GM12878 (cell line): ENCODE measurements at regions of chr14 and their contacts with region 1.

Region 1: DNA sequence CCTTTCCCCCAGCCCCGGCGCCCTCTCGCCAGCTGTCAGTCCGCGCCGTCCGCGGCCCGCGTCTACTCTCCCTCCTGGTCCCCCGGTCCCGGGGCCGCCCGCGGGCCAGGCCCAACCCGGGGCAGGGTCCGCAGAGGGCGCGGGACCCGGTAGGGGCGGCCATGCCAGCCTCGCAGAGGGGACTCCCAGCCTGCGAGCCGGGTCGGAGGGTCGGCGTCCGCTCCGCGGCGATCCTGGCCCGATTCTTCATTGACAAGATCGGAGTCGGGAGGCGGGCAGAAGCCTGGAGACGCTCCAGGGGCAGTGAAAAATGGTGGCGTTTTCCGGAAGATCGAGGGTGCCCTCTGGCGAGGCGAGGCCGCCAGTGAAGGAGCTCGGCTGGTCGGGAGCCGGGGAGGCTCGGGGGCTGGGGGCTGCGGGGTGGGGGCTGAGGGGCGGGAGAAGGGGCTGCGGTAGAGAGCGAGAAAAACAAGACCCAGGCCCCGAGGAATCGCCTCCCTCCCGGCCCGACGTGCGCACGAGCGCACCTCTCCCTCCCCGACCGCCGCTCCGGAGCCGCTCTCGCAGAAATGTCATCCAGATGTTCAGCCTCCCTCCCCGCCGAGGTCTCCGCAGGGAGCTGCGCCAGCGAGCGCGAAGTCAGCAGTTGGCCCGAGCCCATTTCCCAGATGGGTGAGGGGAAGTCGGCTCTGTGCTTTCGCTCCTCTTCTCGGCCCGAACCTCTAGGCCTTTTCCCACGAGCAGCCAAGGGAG is 647 bp upstream of the TGFB3 start:
- DNase-seq: no peak
- ATAC-seq: peak; percentile 81
- H3K4me3 ChIP-seq: peak overlapping the region; percentile 92
- H3K27ac ChIP-seq: 0 out of 2 replicates have a peak overlapping the region, but pooled peaks have one; percentile 47
- H3K4me1 ChIP-seq: peaks cover 24% of the 10 kb centered on the region
- H3K27me3 ChIP-seq: no peaks in the 10 kb centered on the region; a peak in 1 of 4 replicates
- CTCF ChIP-seq: peak; percentile 57 to 79 (median 77)
- EP300 ChIP-seq: no peak
- POLR2A ChIP-seq: no peak
- RAD21 ChIP-seq: peak; percentile 80

Region 2: GRCh38 chr14:75176142-75176820 is 806.2 kb before region 1 on chr14 and contains the start of gene TMED10:
- CTCF ChIA-PET with region 1: no interaction called
- POLR2A ChIA-PET with region 1: no interaction called
- RAD21 ChIA-PET with region 1: no interaction called
- SMC1A ChIA-PET with region 1: no interaction called
- in situ Hi-C with region 1: no loop called
- intact Hi-C with region 1: loop called (anchors 10 kb)
- DNase-seq: no peak
- ATAC-seq: peak; percentile 89
- H3K4me3 ChIP-seq: peak within 1 kb of the TSS; percentile 80
- H3K27ac ChIP-seq: peak within 1 kb of the TSS; percentile 99
- H3K4me1 ChIP-seq: no peaks in the 10 kb centered on the region; the same call in 1 of the 2 replicates
- H3K27me3 ChIP-seq: no peaks in the 10 kb centered on the region
- CTCF ChIP-seq: peak in 1 of 3 experiments; percentile 12; a peak in 1 of 6 replicates
- EP300 ChIP-seq: 0 out of 4 replicates have a peak, but pooled peaks of 1 of the 2 experiments have one; percentile 11
- POLR2A ChIP-seq: peak; percentile 92
- RAD21 ChIP-seq: no peak; the same call in 1 of the 2 replicates
- polyA plus RNA-seq, gene TMED10: 150 to 270 TPM

Region 3: DNA sequence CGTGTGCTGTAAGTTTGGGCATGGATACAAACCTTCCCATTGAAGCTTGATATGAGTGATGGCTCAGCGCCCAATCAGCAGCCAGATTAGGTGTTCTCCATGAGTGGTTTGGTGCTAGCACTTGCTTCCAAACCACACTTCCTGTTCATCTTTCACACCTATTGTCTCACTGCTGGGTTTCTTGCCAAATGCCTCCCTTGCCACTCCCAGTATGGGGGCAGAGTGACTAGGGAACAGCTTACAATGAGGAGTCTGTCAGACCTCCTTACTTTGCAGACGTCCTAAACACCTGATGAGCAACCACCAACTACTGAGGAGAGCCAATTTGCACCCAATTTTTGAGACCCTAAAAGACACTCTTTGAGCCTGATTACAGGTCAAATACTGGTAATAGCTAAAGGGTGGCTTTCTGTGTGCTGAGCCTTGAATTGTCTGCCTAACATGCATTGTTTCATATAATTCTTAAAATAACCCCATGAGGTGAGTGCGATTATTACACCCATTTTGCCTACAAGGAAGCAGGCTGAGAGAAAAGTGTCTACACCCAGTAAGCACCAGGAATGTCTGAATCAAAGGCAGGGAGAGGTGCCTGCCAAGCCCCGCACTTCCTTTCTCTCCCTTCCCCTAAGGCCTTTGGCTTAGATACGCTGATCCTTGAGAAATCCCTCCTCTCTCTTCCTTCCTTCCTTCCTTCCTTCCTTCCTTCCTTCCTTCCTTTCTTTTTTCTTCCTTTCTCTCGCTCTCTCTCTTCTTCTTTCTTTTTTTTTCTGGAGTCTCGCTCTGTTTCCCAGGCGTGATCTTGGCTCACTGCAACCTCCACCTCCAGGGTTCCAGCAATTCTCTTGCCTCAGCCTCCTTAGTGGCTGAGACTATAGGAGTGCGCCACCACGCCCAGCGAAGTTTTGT is 752.0 kb before region 1 on chr14:
- CTCF ChIA-PET with region 1: no interaction called
- POLR2A ChIA-PET with region 1: no interaction called
- RAD21 ChIA-PET with region 1: no interaction called
- SMC1A ChIA-PET with region 1: no interaction called
- in situ Hi-C with region 1: no loop called
- intact Hi-C with region 1: no loop called
- DNase-seq: peak; percentile 74
- ATAC-seq: peak; percentile 81
- H3K4me3 ChIP-seq: no peak overlapping the region
- H3K27ac ChIP-seq: peak overlapping the region; percentile 34; the same call in 1 of the 2 replicates
- H3K4me1 ChIP-seq: peaks cover 37% of the 10 kb centered on the region
- H3K27me3 ChIP-seq: no peaks in the 10 kb centered on the region
- CTCF ChIP-seq: peak in 1 of 3 experiments; percentile 19; a peak in 1 of 6 replicates
- EP300 ChIP-seq: 0 out of 4 replicates have a peak, but pooled peaks of 1 of the 2 experiments have one; percentile 23
- POLR2A ChIP-seq: no peak
- RAD21 ChIP-seq: no peak

Region 4: DNA sequence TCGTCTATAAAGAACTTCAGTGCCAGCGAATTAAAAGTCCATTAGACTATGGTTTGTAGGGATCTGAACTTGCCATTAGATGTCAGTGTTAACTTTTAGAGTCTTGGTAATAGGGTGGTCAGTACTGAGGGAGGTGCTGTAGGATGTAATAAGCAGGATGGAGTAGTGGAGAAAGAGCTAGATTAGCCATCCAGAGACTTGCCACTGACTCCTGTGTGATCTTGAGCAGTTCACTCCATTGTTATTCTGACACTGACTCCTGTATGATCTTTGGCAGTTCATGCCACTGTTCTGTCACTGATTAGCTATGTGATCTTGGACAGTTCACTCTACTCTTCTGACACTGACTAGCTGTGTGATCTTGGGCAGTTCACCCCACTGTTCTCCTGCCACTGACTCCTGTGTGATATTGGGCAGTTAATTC is 187.8 kb before region 1 on chr14:
- CTCF ChIA-PET with region 1: interaction called, 39 read pairs
- POLR2A ChIA-PET with region 1: no interaction called
- RAD21 ChIA-PET with region 1: interaction called, 14 read pairs
- SMC1A ChIA-PET with region 1: interaction called, 6 read pairs
- in situ Hi-C with region 1: no loop called
- intact Hi-C with region 1: no loop called
- DNase-seq: no peak
- ATAC-seq: peak; percentile 40; the same call in 2 of the 3 replicates
- H3K4me3 ChIP-seq: no peak overlapping the region
- H3K27ac ChIP-seq: no peak overlapping the region
- H3K4me1 ChIP-seq: no peaks in the 10 kb centered on the region
- H3K27me3 ChIP-seq: no peaks in the 10 kb centered on the region
- CTCF ChIP-seq: peak in 2 of 3 experiments; percentile 17 to 37; a peak in 2 of 6 replicates
- EP300 ChIP-seq: no peak
- POLR2A ChIP-seq: no peak
- RAD21 ChIP-seq: no peak

Region 5: DNA sequence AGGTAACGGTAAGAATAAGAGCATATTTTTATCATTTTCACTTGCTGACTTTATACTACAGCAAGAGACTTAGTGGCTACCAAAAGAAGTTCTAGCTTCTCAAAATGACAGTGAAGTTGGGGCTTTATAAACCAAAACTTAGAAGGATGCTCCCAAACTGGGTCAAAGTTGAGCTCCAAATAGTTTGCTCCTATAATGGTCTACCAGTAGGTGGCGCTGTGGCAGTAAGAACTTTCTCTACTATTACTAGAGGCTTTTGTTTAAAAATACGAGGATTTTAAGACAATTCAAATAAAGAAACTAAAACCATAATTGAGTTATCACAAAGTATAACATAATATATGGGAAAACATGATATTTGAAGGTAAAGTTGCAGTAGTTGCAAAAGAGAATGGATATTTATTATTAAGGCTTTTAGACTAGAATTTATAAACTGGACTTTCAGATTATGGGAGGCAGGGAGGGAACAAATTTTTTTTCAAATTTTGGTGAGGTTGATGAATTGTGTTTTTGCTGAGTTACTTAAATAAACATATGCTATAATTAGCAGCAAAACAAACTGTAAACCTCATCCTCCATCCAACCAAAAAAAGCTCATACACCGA is 75.7 kb before region 1 on chr14:
- CTCF ChIA-PET with region 1: interaction called, 390 read pairs
- POLR2A ChIA-PET with region 1: interaction called, 5 read pairs
- RAD21 ChIA-PET with region 1: interaction called, 167 read pairs
- SMC1A ChIA-PET with region 1: interaction called, 190 read pairs
- in situ Hi-C with region 1: loop called (anchors 5 kb)
- intact Hi-C with region 1: loop called (anchors 1 kb)
- DNase-seq: no peak
- ATAC-seq: peak; percentile 73
- H3K4me3 ChIP-seq: no peak overlapping the region
- H3K27ac ChIP-seq: no peak overlapping the region
- H3K4me1 ChIP-seq: no peaks in the 10 kb centered on the region
- H3K27me3 ChIP-seq: no peaks in the 10 kb centered on the region
- CTCF ChIP-seq: peak; percentile 69 to 78 (median 71)
- EP300 ChIP-seq: no peak
- POLR2A ChIP-seq: no peak
- RAD21 ChIP-seq: peak; percentile 85

Region 6: DNA sequence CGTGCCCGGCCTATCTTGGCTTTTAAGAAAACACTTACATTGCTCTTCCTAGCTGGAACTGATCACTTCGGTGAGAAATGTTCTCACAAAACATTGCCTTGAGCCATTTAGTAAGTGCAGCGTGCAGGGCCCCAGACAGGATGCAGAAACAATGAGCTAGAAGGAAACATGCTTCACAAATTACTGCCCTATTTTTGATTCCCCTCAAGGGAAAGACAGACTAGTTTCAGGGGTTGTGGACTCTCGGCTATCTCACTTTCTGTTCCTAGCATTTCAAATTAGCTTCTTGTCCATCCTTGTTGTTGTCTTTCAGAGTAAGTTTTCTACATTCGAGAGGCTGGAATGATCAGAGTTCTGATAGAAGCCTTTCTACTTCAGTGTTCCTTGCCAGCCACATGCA is 22.2 kb before region 1 on chr14:
- CTCF ChIA-PET with region 1: interaction called, 32 read pairs
- POLR2A ChIA-PET with region 1: interaction called, 3 read pairs
- RAD21 ChIA-PET with region 1: interaction called, 14 read pairs
- SMC1A ChIA-PET with region 1: interaction called, 8 read pairs
- in situ Hi-C with region 1: no loop called
- intact Hi-C with region 1: no loop called
- DNase-seq: peak; percentile 78
- ATAC-seq: peak; percentile 97
- H3K4me3 ChIP-seq: no peak overlapping the region
- H3K27ac ChIP-seq: peak overlapping the region; percentile 38
- H3K4me1 ChIP-seq: peaks cover 19% of the 10 kb centered on the region
- H3K27me3 ChIP-seq: no peaks in the 10 kb centered on the region
- CTCF ChIP-seq: no peak
- EP300 ChIP-seq: 0 out of 4 replicates have a peak, but pooled peaks of 1 of the 2 experiments have one; percentile 18
- POLR2A ChIP-seq: no peak
- RAD21 ChIP-seq: no peak

Region 7: GRCh38 chr14:75995372-75996041 is 13.1 kb after region 1 on chr14:
- CTCF ChIA-PET with region 1: interaction called, 16 read pairs
- POLR2A ChIA-PET with region 1: no interaction called
- RAD21 ChIA-PET with region 1: interaction called, 4 read pairs
- SMC1A ChIA-PET with region 1: interaction called, 6 read pairs
- in situ Hi-C with region 1: no loop called
- intact Hi-C with region 1: no loop called
- DNase-seq: no peak
- ATAC-seq: no peak
- H3K4me3 ChIP-seq: no peak overlapping the region
- H3K27ac ChIP-seq: no peak overlapping the region
- H3K4me1 ChIP-seq: peaks cover 11% of the 10 kb centered on the region
- H3K27me3 ChIP-seq: no peaks in the 10 kb centered on the region
- CTCF ChIP-seq: no peak
- EP300 ChIP-seq: no peak
- POLR2A ChIP-seq: no peak
- RAD21 ChIP-seq: no peak